ENCODE measurements at regions of chr12 and their contacts with region 1.

Region 1: DNA sequence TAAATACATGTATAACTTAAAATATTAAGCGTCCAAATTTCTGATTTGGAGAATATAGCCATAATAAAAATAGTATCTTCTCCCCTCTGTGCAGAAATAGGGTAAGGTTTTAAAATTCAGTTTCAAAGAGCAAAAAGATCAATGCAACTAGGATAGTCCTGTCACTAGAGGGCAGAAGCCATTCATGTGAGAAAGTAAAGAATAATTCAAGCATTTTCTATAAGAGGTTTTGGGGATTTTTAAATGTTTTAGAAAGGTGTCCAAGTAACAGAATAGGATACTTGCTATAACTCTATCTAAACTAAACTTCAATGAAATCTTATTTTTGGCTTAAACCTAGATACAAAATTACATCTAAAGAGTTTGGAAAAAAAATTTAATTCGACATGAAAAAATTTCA is 50.3 kb downstream of the ADAMTS20 start:
- DNase-seq: peak in 2 of 4 experiments; percentile 5 to 16
- ATAC-seq: no peak
- H3K4me3 ChIP-seq: no peak overlapping the region
- H3K27ac ChIP-seq: no peak overlapping the region
- H3K4me1 ChIP-seq: no peaks in the 10 kb centered on the region
- H3K27me3 ChIP-seq: no peaks in the 10 kb centered on the region
- CTCF ChIP-seq: peak in 2 of 3 experiments; percentile 8 to 25; a peak in 3 of 6 replicates
- EP300 ChIP-seq: no peak
- POLR2A ChIP-seq: no peak
- RAD21 ChIP-seq: peak; percentile 46 to 72

Region 2: GRCh38 chr12:43676183-43676813 is 174.6 kb after region 1 on chr12:
- CTCF ChIA-PET with region 1: no interaction called
- POLR2A ChIA-PET with region 1: no interaction called
- in situ Hi-C with region 1: no loop called
- intact Hi-C with region 1: loop called (anchors 5 kb)
- DNase-seq: peak; percentile 42 to 63 (median 52)
- ATAC-seq: peak; percentile 97
- H3K4me3 ChIP-seq: no peak overlapping the region
- H3K27ac ChIP-seq: no peak overlapping the region
- H3K4me1 ChIP-seq: no peaks in the 10 kb centered on the region
- H3K27me3 ChIP-seq: no peaks in the 10 kb centered on the region
- CTCF ChIP-seq: peak; percentile 67 to 83 (median 74)
- EP300 ChIP-seq: no peak
- POLR2A ChIP-seq: no peak
- RAD21 ChIP-seq: peak in 1 of 2 experiments; percentile 59; a peak in 3 of 4 replicates

Region 3: GRCh38 chr12:43728117-43728516 is 226.4 kb after region 1 on chr12:
- CTCF ChIA-PET with region 1: no interaction called
- POLR2A ChIA-PET with region 1: no interaction called
- in situ Hi-C with region 1: loop called (anchors 5 kb)
- intact Hi-C with region 1: loop called (anchors 2 kb)
- DNase-seq: no peak
- ATAC-seq: no peak
- H3K4me3 ChIP-seq: no peak overlapping the region
- H3K27ac ChIP-seq: no peak overlapping the region
- H3K4me1 ChIP-seq: no peaks in the 10 kb centered on the region
- H3K27me3 ChIP-seq: no peaks in the 10 kb centered on the region
- CTCF ChIP-seq: peak in 1 of 3 experiments; percentile 42; a peak in 2 of 6 replicates
- EP300 ChIP-seq: no peak
- POLR2A ChIP-seq: no peak
- RAD21 ChIP-seq: peak; percentile 55 to 57

Region 4: DNA sequence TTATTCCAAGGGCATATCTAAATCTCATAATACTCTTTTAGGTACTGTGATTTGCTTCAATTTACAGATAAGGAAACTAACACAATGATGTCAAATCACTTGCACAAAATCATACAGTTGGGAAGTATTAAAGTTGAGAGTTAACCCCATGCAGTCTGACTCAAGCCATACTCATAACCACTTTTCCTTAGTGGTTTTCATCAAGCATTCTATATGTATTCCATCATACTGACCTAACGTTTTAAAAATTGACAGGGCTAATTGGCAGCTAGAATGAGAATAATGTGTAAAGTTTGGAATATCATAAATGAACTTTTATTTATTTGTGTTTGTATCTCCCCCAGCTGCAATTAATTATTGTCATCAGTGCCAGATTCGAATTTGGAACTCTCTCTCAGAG is 235.9 kb after region 1 on chr12:
- CTCF ChIA-PET with region 1: no interaction called
- POLR2A ChIA-PET with region 1: no interaction called
- in situ Hi-C with region 1: loop called (anchors 5 kb)
- intact Hi-C with region 1: no loop called
- DNase-seq: no peak
- ATAC-seq: no peak
- H3K4me3 ChIP-seq: no peak overlapping the region
- H3K27ac ChIP-seq: no peak overlapping the region
- H3K4me1 ChIP-seq: no peaks in the 10 kb centered on the region
- H3K27me3 ChIP-seq: no peaks in the 10 kb centered on the region
- CTCF ChIP-seq: no peak
- EP300 ChIP-seq: no peak
- POLR2A ChIP-seq: no peak
- RAD21 ChIP-seq: no peak

Region 5: DNA sequence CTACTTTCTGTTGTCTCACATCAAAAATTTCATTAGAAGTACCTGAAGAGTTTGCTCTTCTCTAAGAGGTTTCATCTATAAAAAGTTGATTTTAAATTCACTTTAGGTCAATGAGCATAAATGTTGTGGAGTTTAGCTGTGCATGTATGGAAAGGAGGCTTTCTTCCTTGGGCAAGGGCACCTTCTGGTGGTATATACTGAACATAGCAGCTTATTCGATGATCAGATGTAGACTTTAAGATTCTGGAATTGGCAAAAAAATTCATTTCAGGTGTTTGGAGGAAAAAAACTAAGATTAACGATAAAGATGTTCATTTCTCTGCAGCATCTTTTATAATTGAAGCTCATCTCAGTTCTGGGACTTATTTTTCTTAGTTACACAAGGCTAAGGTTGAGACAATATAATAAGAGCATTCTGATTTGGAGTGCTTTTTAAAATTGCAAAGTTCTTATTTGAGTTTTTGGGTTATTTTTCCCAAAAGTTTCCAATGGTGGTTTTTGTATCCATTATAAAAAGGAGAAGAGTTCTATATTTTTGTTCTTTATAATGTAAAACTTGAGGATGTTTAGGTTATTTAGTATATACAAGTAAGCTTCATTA is 381.0 kb after region 1 on chr12:
- CTCF ChIA-PET with region 1: interaction called, 6 read pairs
- POLR2A ChIA-PET with region 1: no interaction called
- in situ Hi-C with region 1: no loop called
- intact Hi-C with region 1: loop called (anchors 5 kb)
- DNase-seq: peak; percentile 36 to 54 (median 38)
- ATAC-seq: peak; percentile 93
- H3K4me3 ChIP-seq: no peak overlapping the region
- H3K27ac ChIP-seq: no peak overlapping the region
- H3K4me1 ChIP-seq: no peaks in the 10 kb centered on the region
- H3K27me3 ChIP-seq: no peaks in the 10 kb centered on the region
- CTCF ChIP-seq: peak; percentile 55 to 88 (median 81); a peak in 5 of 6 replicates
- EP300 ChIP-seq: no peak
- POLR2A ChIP-seq: no peak
- RAD21 ChIP-seq: peak; percentile 97

Region 6: GRCh38 chr12:44225149-44225510 is 723.4 kb after region 1 on chr12:
- CTCF ChIA-PET with region 1: no interaction called
- POLR2A ChIA-PET with region 1: no interaction called
- in situ Hi-C with region 1: no loop called
- intact Hi-C with region 1: no loop called
- DNase-seq: no peak
- ATAC-seq: no peak
- H3K4me3 ChIP-seq: no peak overlapping the region
- H3K27ac ChIP-seq: no peak overlapping the region
- H3K4me1 ChIP-seq: no peaks in the 10 kb centered on the region
- H3K27me3 ChIP-seq: no peaks in the 10 kb centered on the region
- CTCF ChIP-seq: no peak
- EP300 ChIP-seq: no peak
- POLR2A ChIP-seq: no peak
- RAD21 ChIP-seq: no peak